Astrocyte of the cerebellum (primary cell): ENCODE measurements at regions of chr6 and their contacts with region 1.

Region 1: GRCh38 chr6:25831532-25832306 is at the start of gene SLC17A1:
- DNase-seq: no peak
- H3K4me3 ChIP-seq: no peak within 1 kb of the TSS
- CTCF ChIP-seq: no peak

Region 2: GRCh38 chr6:25641940-25642666 is 189.6 kb before region 1 on chr6:
- in situ Hi-C with region 1: no loop called
- DNase-seq: no peak
- H3K4me3 ChIP-seq: no peak overlapping the region
- CTCF ChIP-seq: no peak

Region 3: DNA sequence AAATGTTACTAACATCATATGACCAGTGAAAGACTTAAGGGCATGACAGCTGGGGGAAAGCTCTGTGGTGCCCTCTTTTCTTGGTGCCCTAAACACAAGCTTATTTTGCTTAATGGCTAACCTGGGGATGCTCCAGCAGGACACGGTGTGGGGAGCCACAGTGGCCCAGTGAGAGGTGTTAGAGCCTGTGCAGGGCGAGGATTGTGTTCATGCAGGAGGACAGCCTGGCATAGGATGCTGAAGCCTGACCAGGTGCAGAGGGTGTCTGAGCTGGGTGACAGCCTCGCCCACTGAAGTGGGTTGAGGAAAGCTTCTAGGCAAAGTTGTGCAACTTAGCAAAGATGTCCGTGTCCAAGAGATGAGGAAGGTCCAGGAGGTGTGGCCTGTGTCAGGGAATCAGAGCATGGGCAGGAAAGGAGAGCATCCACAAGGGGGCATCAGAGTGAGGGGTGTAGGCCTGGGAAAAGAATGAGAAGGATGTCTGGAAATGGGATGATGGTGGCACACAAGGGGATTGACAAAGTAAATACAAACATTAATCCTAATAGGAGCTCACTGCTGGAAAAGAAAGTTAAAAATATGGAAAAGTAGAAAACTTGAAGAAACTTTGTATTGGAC is 43.3 kb before region 1 on chr6:
- in situ Hi-C with region 1: loop called (anchors 5 kb)
- DNase-seq: no peak
- H3K4me3 ChIP-seq: no peak overlapping the region
- CTCF ChIP-seq: peak; percentile 44

Region 4: GRCh38 chr6:25934735-25935306 is 103.1 kb after region 1 on chr6:
- in situ Hi-C with region 1: no loop called
- DNase-seq: no peak
- H3K4me3 ChIP-seq: no peak overlapping the region
- CTCF ChIP-seq: no peak